Activated naive CD4-positive, alpha-beta T cell treated with anti-CD3 and anti-CD28 coated beads for 36 hours (primary cell): ENCODE measurements at regions of chr12 and their contacts with region 1.

Region 1: DNA sequence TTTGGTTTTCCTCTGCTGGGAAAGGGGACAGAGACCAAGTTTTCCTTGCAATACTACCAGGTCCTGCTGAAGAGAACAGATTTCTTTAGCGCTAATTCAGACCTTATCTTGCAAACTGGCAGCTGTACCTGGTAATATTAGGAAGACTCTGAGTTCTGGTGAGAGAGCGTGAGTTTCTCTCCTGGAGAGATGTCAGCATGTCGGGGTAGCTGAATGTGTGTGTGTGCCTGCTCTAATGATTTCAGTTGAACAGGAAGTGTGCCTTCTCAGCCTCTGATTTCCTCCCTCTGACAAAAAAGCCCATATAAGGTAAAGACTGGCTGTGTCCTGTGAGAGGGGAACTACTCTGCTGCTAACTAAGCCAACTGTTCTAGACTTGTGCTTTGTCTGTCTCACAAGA is 10.3 kb upstream of the ERP27 start:
- DNase-seq: peak; percentile 73
- H3K4me3 Mint-ChIP-seq: peak overlapping the region; percentile 71
- H3K27ac Mint-ChIP-seq: peak overlapping the region; percentile 95
- H3K4me1 Mint-ChIP-seq: peaks cover 82% of the 10 kb centered on the region
- H3K27me3 Mint-ChIP-seq: no peaks in the 10 kb centered on the region

Region 2: DNA sequence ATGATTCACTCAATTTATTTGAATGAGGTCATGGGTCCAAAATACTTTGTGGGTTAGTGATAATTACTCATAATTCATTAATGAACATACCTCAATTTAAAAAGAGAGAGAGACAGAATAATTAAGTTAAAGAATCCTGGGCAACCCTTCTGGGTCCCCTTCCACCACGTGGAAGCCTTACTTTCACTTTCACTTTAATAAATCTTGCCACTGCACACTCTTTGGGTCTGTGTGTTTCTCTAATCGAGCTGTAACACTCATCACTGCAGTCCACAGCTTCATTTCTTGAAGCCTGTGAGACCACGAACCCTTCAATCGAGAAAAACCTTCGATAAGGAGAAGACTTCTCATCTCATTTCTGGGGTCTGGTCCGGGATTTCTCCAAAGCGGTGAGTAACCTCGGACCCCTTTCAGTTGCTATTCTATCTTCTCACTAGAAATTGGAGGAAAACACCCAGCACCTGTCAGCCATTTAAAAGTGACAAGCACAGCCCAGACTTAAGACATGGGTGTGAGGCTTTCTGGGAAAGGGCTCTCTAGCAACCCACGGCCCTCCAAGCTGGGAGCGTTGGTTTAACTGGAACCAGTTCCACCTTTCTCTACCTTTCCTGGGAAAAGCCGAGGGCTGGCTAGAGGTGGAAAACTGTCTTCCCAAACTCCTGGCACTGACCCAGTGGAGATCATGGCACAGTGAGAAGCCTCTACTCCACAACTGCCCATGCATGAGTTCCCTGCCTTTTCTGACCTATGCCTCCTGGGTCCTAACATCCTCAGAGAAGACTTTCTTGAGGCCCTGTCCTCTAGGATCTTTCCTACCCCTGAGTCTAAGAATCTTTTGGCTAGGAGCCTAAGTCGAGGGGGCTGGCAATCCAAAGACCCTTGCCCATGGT is 732.0 kb before region 1 on chr12:
- CTCF ChIA-PET with region 1: no interaction called
- intact Hi-C with region 1: loop called (anchors 2 kb)
- DNase-seq: no peak
- H3K4me3 Mint-ChIP-seq: no peak overlapping the region
- H3K27ac Mint-ChIP-seq: peak overlapping the region; percentile 70
- H3K4me1 Mint-ChIP-seq: peaks cover 24% of the 10 kb centered on the region
- H3K27me3 Mint-ChIP-seq: no peaks in the 10 kb centered on the region

Region 3: DNA sequence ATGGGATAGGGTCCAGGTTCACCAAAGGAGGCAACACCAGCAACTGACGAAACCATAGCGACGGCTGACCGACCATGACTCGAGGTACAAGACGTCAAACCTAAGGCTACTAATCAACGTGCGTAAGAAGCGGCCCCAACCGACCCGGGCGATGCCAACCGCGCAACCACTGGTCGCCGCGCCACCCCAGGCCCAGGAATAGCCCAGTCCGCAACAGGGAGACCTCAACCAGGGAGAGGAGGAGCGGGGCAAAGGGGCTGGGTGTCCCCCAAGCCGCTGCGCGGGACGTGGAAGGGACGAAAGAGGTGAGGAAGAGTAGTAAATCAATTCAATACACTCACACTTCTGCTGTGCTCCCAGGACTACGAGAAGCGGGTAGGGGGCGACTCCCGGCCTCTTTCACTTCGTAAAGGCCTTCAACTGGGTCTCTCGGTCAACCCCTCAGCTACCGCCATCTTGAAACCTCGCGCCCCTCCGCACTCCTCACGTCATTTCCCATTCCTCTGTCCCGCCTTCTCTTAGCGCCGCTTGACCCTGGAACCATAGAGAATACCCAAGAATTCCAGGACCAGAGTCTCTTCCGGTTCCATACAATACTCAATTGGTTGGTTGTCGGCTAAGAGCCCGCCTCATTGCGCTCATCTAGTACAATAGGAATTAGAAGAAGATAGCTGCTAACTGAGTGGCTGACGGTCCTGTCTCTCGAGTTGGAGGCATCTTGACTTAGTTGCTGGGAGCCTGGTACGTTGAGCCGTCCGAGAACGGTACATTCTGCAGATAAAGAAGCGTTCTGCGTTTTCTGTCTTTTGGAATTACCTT is 145.5 kb before region 1 on chr12 and contains the starts of genes C12orf60 and WBP11:
- CTCF ChIA-PET with region 1: no interaction called
- intact Hi-C with region 1: loop called (anchors 1 kb)
- DNase-seq: peak; percentile 94
- H3K4me3 Mint-ChIP-seq: no peak within 1 kb of the TSS
- H3K27ac Mint-ChIP-seq: no peak within 1 kb of the TSS
- H3K4me1 Mint-ChIP-seq: peaks cover 34% of the 10 kb centered on the region
- H3K27me3 Mint-ChIP-seq: no peaks in the 10 kb centered on the region
- total RNA-seq, gene C12orf60: 2.0 to 3.1 TPM
- total RNA-seq, gene WBP11: 105 to 115 TPM

Region 4: GRCh38 chr12:14923944-14924343 is 24.7 kb before region 1 on chr12:
- CTCF ChIA-PET with region 1: no interaction called
- intact Hi-C with region 1: no loop called
- DNase-seq: no peak
- H3K4me3 Mint-ChIP-seq: no peak overlapping the region
- H3K27ac Mint-ChIP-seq: no peak overlapping the region
- H3K4me1 Mint-ChIP-seq: peaks cover 19% of the 10 kb centered on the region
- H3K27me3 Mint-ChIP-seq: no peaks in the 10 kb centered on the region

Region 5: GRCh38 chr12:14937689-14938088 is 11.0 kb before region 1 on chr12:
- CTCF ChIA-PET with region 1: interaction called, 6 read pairs
- intact Hi-C with region 1: loop called (anchors 1 kb)
- DNase-seq: peak; percentile 41
- H3K4me3 Mint-ChIP-seq: no peak overlapping the region
- H3K27ac Mint-ChIP-seq: no peak overlapping the region
- H3K4me1 Mint-ChIP-seq: peaks cover 43% of the 10 kb centered on the region
- H3K27me3 Mint-ChIP-seq: no peaks in the 10 kb centered on the region

Region 6: GRCh38 chr12:15004421-15004820 is 55.7 kb after region 1 on chr12:
- CTCF ChIA-PET with region 1: no interaction called
- intact Hi-C with region 1: no loop called
- DNase-seq: no peak
- H3K4me3 Mint-ChIP-seq: no peak overlapping the region
- H3K27ac Mint-ChIP-seq: no peak overlapping the region
- H3K4me1 Mint-ChIP-seq: no peaks in the 10 kb centered on the region
- H3K27me3 Mint-ChIP-seq: peaks cover 21% of the 10 kb centered on the region

Region 7: DNA sequence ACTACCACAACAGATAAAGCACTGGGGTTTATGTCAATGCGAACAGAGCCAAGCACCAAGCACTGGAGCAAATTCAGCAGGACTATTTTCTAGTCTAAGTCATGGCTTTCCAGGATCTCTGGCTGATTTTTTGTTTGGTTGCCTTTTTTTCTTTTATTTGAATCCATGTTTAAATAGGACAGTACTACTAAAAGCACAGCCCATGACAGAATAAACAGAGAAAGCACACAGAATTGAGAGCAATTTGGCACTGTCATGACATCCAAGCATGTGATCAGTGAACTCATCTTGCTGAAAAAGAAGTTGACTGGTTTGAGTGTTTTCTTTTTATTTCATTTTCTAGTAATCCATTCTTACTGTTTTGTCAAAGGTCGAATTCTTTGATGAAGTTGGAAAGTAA is 295.7 kb after region 1 on chr12:
- CTCF ChIA-PET with region 1: no interaction called
- intact Hi-C with region 1: no loop called
- DNase-seq: no peak
- H3K4me3 Mint-ChIP-seq: no peak overlapping the region
- H3K27ac Mint-ChIP-seq: no peak overlapping the region
- H3K4me1 Mint-ChIP-seq: no peaks in the 10 kb centered on the region
- H3K27me3 Mint-ChIP-seq: peaks cover 59% of the 10 kb centered on the region

Region 8: DNA sequence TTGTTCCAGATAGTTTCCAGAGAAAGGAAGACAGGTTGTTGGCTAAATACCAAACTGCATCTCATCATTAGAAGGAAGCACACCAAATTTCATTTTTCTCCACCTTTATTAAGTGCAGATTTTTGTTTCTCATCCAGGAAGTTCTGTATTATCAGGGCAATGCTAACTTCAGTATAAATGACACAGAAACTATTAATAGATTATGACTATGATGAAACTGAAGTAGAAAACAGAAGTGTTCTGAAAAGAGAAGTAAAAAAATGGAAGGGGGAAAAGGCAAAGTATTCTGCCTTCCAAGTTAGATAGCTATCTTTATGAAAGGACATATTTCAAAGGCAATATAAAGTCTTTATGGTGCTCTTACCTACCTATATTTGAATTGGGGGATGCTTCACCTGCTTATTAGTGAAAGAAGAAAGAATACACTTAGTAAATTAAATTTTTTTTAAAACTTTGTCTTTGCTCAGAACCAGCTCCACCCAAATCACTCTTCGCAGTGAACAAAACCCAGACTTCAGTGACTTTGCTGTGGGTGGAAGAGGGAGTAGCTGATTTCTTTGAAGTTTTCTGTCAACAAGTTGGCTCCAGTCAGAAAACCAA is 597.5 kb after region 1 on chr12:
- CTCF ChIA-PET with region 1: no interaction called
- intact Hi-C with region 1: loop called (anchors 5 kb)
- DNase-seq: peak; percentile 38
- H3K4me3 Mint-ChIP-seq: no peak overlapping the region
- H3K27ac Mint-ChIP-seq: peak overlapping the region; percentile 79
- H3K4me1 Mint-ChIP-seq: peaks cover 64% of the 10 kb centered on the region
- H3K27me3 Mint-ChIP-seq: no peaks in the 10 kb centered on the region